Mammary epithelial cell (primary cell): ENCODE measurements at regions of chr10 and their contacts with region 1.

Region 1: DNA sequence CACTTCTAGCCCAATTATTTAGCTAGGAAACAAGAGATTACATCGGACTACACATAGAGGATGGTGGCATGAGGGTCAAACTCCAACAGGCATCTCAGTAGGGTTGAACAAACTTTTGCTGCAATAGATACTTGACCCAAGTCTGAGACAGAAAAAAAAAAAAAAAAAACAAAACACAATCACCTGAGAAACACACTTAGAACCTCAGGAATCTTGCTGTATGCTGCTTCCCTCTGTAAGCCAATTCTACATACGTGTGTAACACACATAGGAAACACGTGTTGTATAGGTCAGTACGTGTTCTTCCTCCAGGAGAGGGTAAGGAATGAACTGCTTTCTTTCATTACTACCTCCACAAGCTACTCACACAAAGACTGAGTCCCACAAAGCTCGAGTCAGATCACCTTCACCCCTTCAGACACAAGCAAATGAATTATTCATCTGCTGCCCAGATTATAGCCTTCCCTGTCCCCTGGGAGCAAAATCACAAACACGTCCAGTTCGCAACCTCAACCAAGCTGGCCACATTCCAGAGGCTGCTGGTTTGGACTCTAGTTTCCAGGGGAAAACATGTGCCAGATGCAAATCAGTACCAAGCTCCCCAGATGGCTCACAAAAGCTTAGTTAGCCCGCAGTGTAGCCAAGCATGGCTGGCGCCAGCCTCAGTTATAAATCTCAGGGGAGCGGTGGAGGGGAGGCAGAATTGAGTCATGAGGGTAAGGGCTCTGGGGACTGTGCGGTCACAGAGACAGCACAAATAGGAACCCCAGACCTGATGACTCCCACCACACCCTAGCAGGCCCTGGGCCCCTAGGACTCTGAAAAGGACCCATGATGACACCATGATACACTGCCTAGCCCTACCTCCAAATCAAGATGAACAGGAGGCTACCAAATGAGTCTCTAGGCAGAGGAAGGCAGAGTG is 15.1 kb downstream of the PSAP start:
- DNase-seq: peak; percentile 30
- H3K4me3 ChIP-seq: no peak overlapping the region
- H3K27ac ChIP-seq: peak overlapping the region; percentile 98
- H3K4me1 ChIP-seq: peaks cover 67% of the 10 kb centered on the region
- H3K27me3 ChIP-seq: no peaks in the 10 kb centered on the region
- CTCF ChIP-seq: no peak

Region 2: GRCh38 chr10:71756311-71757191 is 79.4 kb before region 1 on chr10:
- CTCF ChIA-PET with region 1: no interaction called
- dilution Hi-C with region 1: loop called (anchors 5 kb)
- in situ Hi-C with region 1: no loop called
- intact Hi-C with region 1: no loop called
- DNase-seq: no peak
- H3K4me3 ChIP-seq: no peak overlapping the region
- H3K27ac ChIP-seq: no peak overlapping the region
- H3K4me1 ChIP-seq: peaks cover 26% of the 10 kb centered on the region
- H3K27me3 ChIP-seq: no peaks in the 10 kb centered on the region
- CTCF ChIP-seq: no peak

Region 3: DNA sequence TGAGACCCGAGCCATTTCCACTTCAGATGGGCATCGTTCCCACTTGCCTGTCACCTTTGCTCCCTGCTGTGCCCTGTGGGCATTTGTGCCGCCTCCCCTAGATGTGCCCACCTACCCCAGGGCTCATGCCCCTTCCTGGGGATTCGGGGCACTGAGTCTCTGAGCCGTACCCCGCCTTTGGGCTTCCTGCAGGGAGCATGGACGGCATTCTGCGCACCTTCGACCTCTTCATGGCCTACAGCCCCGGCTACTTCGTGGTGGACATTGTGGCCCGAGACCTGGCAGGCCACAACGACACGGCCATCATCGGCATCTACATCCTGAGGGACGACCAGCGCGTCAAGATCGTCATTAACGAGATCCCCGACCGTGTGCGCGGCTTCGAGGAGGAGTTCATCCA is 26.3 kb before region 1 on chr10:
- CTCF ChIA-PET with region 1: no interaction called
- dilution Hi-C with region 1: no loop called
- in situ Hi-C with region 1: no loop called
- intact Hi-C with region 1: no loop called
- DNase-seq: no peak
- H3K4me3 ChIP-seq: no peak overlapping the region
- H3K27ac ChIP-seq: no peak overlapping the region
- H3K4me1 ChIP-seq: no peaks in the 10 kb centered on the region
- H3K27me3 ChIP-seq: no peaks in the 10 kb centered on the region
- CTCF ChIP-seq: no peak

Region 4: GRCh38 chr10:71850637-71851464 is 14.9 kb after region 1 on chr10 and contains the start of gene PSAP:
- CTCF ChIA-PET with region 1: no interaction called
- dilution Hi-C with region 1: no loop called
- in situ Hi-C with region 1: no loop called
- intact Hi-C with region 1: loop called (anchors 1 kb)
- DNase-seq: peak; percentile 98
- H3K4me3 ChIP-seq: peak within 1 kb of the TSS; percentile 84 to 100 (median 90)
- H3K27ac ChIP-seq: peak within 1 kb of the TSS; percentile 87
- H3K4me1 ChIP-seq: peaks cover 13% of the 10 kb centered on the region
- H3K27me3 ChIP-seq: no peaks in the 10 kb centered on the region
- CTCF ChIP-seq: no peak
- total RNA-seq, gene PSAP: 655 to 1,757 TPM

Region 5: DNA sequence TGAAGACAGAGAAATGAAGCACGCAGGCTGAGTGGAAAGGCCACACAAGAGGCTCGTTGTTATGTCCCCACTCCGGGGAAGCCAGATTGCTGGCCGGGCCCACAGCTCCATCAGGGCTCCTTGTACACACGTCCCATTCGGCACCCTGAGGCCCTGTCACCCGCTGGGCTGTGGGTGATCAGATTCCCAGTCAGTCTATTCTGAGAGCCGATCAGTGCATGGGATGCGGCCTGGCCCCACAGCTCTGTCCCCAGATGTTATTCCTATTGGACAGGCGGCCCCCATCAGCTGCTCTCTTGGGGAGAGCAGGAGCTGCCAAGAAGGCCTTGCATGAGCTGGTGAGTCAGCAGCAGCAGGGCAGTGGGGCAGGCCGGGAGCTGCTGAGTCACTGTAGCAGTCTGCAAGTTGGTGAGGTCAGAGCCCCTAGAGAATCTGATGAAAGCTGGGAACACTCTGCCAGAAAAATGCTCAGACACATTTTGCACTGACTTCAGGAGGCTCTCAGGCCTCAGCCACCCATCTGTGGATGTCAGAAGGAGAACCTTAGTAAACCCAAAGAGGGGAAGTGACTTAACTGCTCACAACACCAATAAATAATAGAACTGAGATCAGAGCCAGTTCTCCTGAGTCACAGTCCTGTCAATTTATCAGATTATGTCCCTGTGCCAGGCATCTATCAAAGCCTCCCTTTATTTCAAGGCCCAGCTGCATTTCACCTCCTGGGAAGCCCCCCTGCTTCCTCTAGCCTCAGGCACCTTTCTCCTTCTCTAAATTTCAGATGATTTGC is 24.5 kb after region 1 on chr10:
- CTCF ChIA-PET with region 1: no interaction called
- dilution Hi-C with region 1: no loop called
- in situ Hi-C with region 1: no loop called
- intact Hi-C with region 1: loop called (anchors 1 kb)
- DNase-seq: peak; percentile 99
- H3K4me3 ChIP-seq: no peak overlapping the region
- H3K27ac ChIP-seq: peak overlapping the region; percentile 91
- H3K4me1 ChIP-seq: peaks cover 30% of the 10 kb centered on the region
- H3K27me3 ChIP-seq: no peaks in the 10 kb centered on the region
- CTCF ChIP-seq: no peak

Region 6: DNA sequence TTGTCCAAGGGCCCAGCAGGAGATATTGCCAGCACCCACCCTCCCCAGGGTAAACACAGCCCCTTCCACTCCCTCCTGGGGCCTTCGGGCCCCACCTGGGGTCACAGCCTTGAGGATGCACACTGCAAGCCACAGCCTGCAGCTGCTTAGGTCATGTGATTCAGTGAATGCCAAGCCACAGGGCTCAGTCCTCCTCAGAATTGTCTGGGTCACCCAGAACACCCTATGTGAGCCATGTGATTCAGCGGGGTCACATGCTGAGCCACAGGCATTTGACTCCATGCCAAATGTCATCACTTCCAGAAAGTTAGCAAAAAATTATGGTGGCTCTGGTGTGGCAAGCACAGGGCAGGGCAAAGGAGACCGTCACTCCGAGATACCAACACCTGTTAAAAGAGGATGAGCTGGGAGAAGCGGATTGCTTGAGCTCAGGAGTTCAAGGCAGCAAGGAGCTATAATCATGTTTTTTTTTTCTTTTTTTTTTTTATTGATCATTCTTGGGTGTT is 32.3 kb after region 1 on chr10:
- CTCF ChIA-PET with region 1: no interaction called
- dilution Hi-C with region 1: no loop called
- in situ Hi-C with region 1: no loop called
- intact Hi-C with region 1: loop called (anchors 1 kb)
- DNase-seq: peak; percentile 92
- H3K4me3 ChIP-seq: no peak overlapping the region
- H3K27ac ChIP-seq: peak overlapping the region; percentile 24
- H3K4me1 ChIP-seq: peaks cover 29% of the 10 kb centered on the region
- H3K27me3 ChIP-seq: no peaks in the 10 kb centered on the region
- CTCF ChIP-seq: no peak

Region 7: GRCh38 chr10:71888623-71889387 is 52.9 kb after region 1 on chr10:
- CTCF ChIA-PET with region 1: no interaction called
- dilution Hi-C with region 1: no loop called
- in situ Hi-C with region 1: loop called (anchors 10 kb)
- intact Hi-C with region 1: loop called (anchors 1 kb)
- DNase-seq: peak; percentile 78
- H3K4me3 ChIP-seq: peak overlapping the region; percentile 56 to 59 (median 56)
- H3K27ac ChIP-seq: peak overlapping the region; percentile 84
- H3K4me1 ChIP-seq: peaks cover 12% of the 10 kb centered on the region
- H3K27me3 ChIP-seq: no peaks in the 10 kb centered on the region
- CTCF ChIP-seq: no peak

Region 8: GRCh38 chr10:71945819-71946474 is 110.0 kb after region 1 on chr10:
- CTCF ChIA-PET with region 1: no interaction called
- dilution Hi-C with region 1: no loop called
- in situ Hi-C with region 1: no loop called
- intact Hi-C with region 1: no loop called
- DNase-seq: no peak
- H3K4me3 ChIP-seq: no peak overlapping the region
- H3K27ac ChIP-seq: no peak overlapping the region
- H3K4me1 ChIP-seq: peaks cover 7% of the 10 kb centered on the region
- H3K27me3 ChIP-seq: no peaks in the 10 kb centered on the region
- CTCF ChIP-seq: no peak